Common myeloid progenitor, CD34-positive (primary cell): ENCODE measurements at regions of chr21 and their contacts with region 1.

Region 1: DNA sequence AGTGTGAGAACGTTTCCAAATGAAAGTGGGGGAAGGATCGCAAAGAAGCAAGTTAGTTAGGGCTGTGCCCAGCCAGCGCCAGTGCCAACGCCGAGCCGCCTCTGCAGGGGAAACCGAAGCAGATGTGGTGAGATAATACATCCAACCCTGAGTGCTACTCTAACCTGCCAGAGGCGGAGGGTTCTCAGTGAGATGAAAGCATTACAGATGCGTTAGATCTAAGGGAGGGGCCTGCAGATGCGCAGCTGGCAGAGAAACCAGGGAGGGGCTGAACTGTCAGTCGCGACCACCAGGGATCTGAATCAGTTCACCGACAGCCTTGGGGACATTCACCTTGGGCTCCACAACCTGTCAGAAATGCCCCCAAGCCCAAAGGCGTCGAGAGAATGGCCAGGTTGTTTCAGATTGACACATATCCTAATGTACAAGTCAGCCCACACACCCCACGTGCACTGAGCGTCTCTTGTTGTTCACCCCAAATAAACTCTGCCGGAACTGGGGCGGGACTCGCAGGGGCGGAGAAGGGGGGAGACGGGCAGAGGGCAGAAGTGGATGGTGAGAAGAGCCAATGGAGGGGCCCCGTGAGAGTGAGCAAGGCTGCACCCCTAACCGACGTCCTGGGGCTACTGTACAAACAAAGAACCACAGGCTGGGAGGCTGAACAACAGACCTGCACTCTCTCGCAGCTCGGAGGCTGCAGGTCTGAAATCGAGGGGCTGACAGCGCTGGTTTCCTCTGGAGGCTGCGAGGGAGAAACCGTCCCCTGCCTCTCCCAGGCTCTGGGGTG is 8.7 kb upstream of the UMODL1 start:
- DNase-seq: peak; percentile 93 to 99 (median 97)
- H3K4me3 ChIP-seq: peak overlapping the region in 6 of 7 experiments; percentile 34 to 76 (median 51)
- H3K27ac ChIP-seq: peak overlapping the region; percentile 73 to 87
- H3K4me1 ChIP-seq: peaks cover 12 to 63% (median 62%) of the 10 kb centered on the region in 4 experiments
- H3K27me3 ChIP-seq: no peaks in the 10 kb centered on the region

Region 2: GRCh38 chr21:42009831-42010523 is 52.5 kb before region 1 on chr21 and contains the start of gene ZBTB21:
- CTCF ChIA-PET with region 1: interaction called, 6 read pairs
- POLR2A ChIA-PET with region 1: interaction called, 22 read pairs
- DNase-seq: peak; percentile 97 to 98 (median 97)
- H3K4me3 ChIP-seq: peak within 1 kb of the TSS; percentile 72 to 88 (median 81)
- H3K27ac ChIP-seq: peak within 1 kb of the TSS; percentile 91 to 95
- H3K4me1 ChIP-seq: peaks cover 0 to 23% (median 15%) of the 10 kb centered on the region in 4 experiments
- H3K27me3 ChIP-seq: no peaks in the 10 kb centered on the region

Region 3: GRCh38 chr21:42027822-42028765 is 34.3 kb before region 1 on chr21:
- CTCF ChIA-PET with region 1: interaction called, 7 read pairs
- POLR2A ChIA-PET with region 1: interaction called, 27 read pairs
- DNase-seq: peak; percentile 18 to 89 (median 82)
- H3K4me3 ChIP-seq: peak overlapping the region in 1 of 7 experiments; percentile 5
- H3K27ac ChIP-seq: peak overlapping the region in 1 of 2 experiments; percentile 15
- H3K4me1 ChIP-seq: peaks cover 4 to 47% (median 37%) of the 10 kb centered on the region in 4 experiments
- H3K27me3 ChIP-seq: no peaks in the 10 kb centered on the region

Region 4: DNA sequence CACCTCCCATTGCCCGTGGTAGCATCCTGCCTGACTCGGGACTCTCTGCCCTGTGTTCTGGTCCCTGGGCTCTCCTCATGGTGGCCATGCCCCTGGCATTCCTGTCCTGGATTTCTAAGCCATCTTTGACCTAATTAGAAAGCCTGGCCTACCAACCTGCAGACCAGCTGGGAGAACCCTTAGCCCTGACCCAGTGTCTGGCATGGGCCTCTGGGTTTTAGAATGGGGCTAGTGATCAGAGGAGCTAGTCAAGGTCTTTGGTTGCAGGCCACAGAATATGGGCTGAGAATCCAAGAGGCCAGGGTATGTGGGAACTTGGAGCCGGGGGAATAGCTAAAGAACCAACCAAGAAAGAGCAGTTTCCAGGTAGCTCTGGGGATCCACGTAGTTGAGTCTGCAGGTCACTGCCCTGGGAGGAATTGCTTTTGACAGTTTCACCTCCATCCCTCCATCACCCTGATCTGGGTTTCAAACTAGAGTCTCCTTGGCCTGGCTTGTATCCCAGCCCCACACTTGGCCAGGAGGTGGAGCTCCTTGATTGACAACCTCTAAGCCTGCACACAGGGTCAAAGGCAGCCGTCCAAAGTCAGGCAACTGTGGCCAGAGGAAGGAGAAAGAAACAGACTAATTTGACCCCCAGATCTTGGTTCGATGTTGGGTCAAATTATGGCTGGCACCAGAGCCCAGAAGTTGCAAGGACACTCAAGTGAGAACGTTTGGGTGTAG is 101.8 kb after region 1 on chr21:
- CTCF ChIA-PET with region 1: no interaction called
- POLR2A ChIA-PET with region 1: no interaction called
- DNase-seq: peak; percentile 49 to 64 (median 54)
- H3K4me3 ChIP-seq: no peak overlapping the region
- H3K27ac ChIP-seq: no peak overlapping the region
- H3K4me1 ChIP-seq: peaks cover 0 to 30% (median 26%) of the 10 kb centered on the region in 4 experiments
- H3K27me3 ChIP-seq: no peaks in the 10 kb centered on the region